ENCODE measurements at regions of chr20 and their contacts with region 1.

Region 1: DNA sequence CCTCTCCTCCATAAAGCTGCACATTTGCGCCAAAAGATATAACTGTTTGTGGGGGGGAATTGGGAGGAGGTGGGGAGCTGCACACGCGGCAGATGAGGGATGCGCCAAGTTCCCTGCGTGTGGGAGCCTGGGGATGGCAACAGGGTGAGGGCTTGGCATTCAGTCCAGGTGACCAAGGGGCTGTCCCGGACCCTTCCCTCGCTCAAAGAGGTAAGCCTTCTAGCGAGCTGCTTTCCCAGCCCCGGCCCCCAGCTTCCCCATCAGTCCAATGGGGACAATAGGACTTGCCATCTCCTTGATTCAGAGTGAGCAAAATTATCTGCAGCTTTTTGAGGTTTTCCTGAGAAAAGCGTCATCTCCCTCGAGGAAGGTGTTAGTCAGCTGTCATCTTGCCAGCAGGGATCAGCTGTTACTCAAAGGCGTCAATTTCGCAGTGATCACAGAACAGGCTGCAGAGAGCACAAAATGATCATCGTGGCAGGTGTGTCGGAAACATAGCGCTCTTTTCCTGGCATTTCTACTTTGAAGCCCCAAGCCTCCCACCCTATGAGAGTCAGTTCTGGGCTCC is 21.3 kb downstream of the ZNF831 start:
- DNase-seq: peak in 1 of 2 donors; percentile 47
- ATAC-seq: peak; percentile 59 to 67 (median 67)
- H3K4me3 ChIP-seq: no peak overlapping the region
- H3K4me3 Mint-ChIP-seq: peak overlapping the region; percentile 84
- H3K27ac ChIP-seq: peak overlapping the region; percentile 39
- H3K27ac Mint-ChIP-seq: peak overlapping the region; percentile 96 to 98
- H3K4me1 ChIP-seq: peaks cover 60% of the 10 kb centered on the region
- H3K4me1 Mint-ChIP-seq: peaks cover 79 to 80% of the 10 kb centered on the region in 2 donors
- H3K27me3 ChIP-seq: no peaks in the 10 kb centered on the region
- H3K27me3 Mint-ChIP-seq: no peaks in the 10 kb centered on the region
- CTCF ChIP-seq: no peak

Region 2: GRCh38 chr20:59141787-59142581 is 43.0 kb before region 1 on chr20:
- intact Hi-C with region 1: loop called (anchors 5 kb)
- DNase-seq: peak in 1 of 2 donors; percentile 52
- ATAC-seq: no peak
- H3K4me3 ChIP-seq: no peak overlapping the region
- H3K4me3 Mint-ChIP-seq: no peak overlapping the region
- H3K27ac ChIP-seq: no peak overlapping the region
- H3K27ac Mint-ChIP-seq: no peak overlapping the region
- H3K4me1 ChIP-seq: peaks cover 32% of the 10 kb centered on the region
- H3K4me1 Mint-ChIP-seq: peaks cover 31 to 32% of the 10 kb centered on the region in 2 donors
- H3K27me3 ChIP-seq: no peaks in the 10 kb centered on the region
- H3K27me3 Mint-ChIP-seq: no peaks in the 10 kb centered on the region
- CTCF ChIP-seq: no peak

Region 3: GRCh38 chr20:59149651-59150504 is 35.1 kb before region 1 on chr20:
- intact Hi-C with region 1: loop called (anchors 1 kb)
- DNase-seq: peak; percentile 67 to 94
- ATAC-seq: peak; percentile 89 to 95 (median 89)
- H3K4me3 ChIP-seq: no peak overlapping the region
- H3K4me3 Mint-ChIP-seq: peak overlapping the region; percentile 82
- H3K27ac ChIP-seq: peak overlapping the region; percentile 97
- H3K27ac Mint-ChIP-seq: peak overlapping the region; percentile 92 to 95
- H3K4me1 ChIP-seq: peaks cover 82% of the 10 kb centered on the region
- H3K4me1 Mint-ChIP-seq: peaks cover 71 to 81% of the 10 kb centered on the region in 2 donors
- H3K27me3 ChIP-seq: no peaks in the 10 kb centered on the region
- H3K27me3 Mint-ChIP-seq: peaks cover 6 to 8% of the 10 kb centered on the region in 2 donors
- CTCF ChIP-seq: no peak

Region 4: DNA sequence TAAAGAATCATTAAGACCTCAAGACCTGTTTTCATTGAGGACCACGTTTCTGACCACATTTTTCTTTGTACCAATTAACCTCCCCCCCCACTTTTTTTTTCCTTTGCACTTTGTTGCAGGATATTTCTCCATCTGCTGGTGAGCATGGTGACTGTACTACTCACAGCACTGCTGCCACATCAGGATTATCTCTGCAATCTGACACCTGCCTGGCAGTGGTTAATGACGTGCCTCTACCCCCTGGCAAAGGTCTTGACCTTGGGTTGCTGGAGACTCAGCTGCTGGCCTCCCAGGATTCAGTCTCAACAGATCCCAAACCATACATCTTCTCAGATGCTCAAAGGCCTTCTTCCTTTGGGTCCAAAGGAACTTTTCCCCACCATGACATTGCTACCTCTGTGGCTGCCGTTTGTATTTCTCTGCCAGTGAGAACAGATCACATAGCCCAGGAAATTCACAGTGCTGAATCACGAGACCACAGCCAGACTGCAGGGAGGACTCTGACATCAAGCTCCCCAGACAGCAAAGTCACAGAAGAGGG is 68.9 kb after region 1 on chr20:
- intact Hi-C with region 1: no loop called
- DNase-seq: peak; percentile 25 to 57
- ATAC-seq: peak; percentile 59 to 80 (median 78)
- H3K4me3 ChIP-seq: no peak overlapping the region
- H3K4me3 Mint-ChIP-seq: peak overlapping the region; percentile 73
- H3K27ac ChIP-seq: peak overlapping the region; percentile 36
- H3K27ac Mint-ChIP-seq: peak overlapping the region; percentile 83 to 88
- H3K4me1 ChIP-seq: peaks cover 20% of the 10 kb centered on the region
- H3K4me1 Mint-ChIP-seq: peaks cover 56 to 61% of the 10 kb centered on the region in 2 donors
- H3K27me3 ChIP-seq: no peaks in the 10 kb centered on the region
- H3K27me3 Mint-ChIP-seq: no peaks in the 10 kb centered on the region
- CTCF ChIP-seq: no peak

Measured in natural killer cell (primary cell).